Kidney (tissue), 22 donors: ENCODE measurements at regions of chr1 and their contacts with region 1.

Region 1: DNA sequence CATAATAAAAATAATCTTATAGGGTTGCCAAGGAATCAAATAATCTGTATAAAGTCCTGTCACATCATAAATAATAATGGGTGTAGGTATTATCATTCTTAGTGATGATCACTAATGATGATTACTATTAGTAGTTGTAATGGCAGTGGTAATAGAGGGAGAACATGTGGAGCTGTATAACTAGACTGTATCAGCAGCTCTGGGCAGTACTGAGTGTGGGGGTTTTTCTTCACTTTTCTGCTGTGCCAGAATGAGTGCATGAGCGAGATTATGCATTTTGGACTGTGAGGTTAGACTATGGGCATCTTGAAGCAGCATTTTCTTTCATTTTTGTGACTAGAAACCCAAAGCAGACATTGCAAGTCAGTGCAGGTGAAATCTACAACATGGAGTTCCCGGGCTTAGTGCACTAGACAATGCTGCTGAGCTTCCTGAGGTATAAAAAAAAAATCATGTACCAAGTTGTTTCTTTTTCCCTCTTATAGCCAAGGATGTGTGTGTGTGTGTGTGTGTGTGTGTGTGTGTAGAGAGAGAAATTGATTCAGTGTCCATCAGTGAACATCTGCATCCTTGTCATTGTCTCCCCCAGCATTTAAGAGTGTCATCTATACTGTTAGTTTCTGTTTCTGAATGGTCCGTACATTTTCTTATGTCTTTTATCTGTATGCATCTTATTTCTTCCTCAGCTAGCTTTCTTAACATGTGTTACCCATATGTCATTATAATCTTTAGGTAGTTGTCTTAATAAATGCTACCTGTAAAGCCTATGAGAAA is 86.6 kb downstream of the GIPC2 start:
- DNase-seq: no peak
- H3K4me3 ChIP-seq: no peak overlapping the region
- H3K27ac ChIP-seq: no peak overlapping the region
- H3K4me1 ChIP-seq: no peaks in the 10 kb centered on the region
- H3K27me3 ChIP-seq: no peaks in the 10 kb centered on the region
- CTCF ChIP-seq: no peak

Region 2: DNA sequence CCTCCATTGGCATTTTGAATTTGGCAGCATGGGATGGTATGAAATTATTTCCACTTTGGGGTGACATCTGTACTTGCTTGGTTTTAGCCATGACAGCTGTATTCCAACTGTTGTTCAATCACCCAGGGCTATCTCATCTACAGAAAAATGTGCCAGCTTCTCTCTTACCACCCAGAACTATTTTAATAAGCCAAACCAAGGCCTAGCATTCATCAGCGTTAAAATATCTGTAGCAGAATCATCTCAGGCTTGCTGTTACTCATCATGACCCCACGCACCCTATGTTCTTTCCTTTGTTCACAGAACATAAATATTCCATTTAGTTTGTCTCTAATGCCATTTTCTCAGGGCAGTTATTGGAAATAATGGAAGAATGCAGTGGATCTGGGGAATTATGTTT is 36.8 kb before region 1 on chr1:
- intact Hi-C with region 1: no loop called
- DNase-seq: no peak
- H3K4me3 ChIP-seq: no peak overlapping the region
- H3K27ac ChIP-seq: no peak overlapping the region
- H3K4me1 ChIP-seq: no peaks in the 10 kb centered on the region
- H3K27me3 ChIP-seq: no peaks in the 10 kb centered on the region
- CTCF ChIP-seq: no peak

Region 3: DNA sequence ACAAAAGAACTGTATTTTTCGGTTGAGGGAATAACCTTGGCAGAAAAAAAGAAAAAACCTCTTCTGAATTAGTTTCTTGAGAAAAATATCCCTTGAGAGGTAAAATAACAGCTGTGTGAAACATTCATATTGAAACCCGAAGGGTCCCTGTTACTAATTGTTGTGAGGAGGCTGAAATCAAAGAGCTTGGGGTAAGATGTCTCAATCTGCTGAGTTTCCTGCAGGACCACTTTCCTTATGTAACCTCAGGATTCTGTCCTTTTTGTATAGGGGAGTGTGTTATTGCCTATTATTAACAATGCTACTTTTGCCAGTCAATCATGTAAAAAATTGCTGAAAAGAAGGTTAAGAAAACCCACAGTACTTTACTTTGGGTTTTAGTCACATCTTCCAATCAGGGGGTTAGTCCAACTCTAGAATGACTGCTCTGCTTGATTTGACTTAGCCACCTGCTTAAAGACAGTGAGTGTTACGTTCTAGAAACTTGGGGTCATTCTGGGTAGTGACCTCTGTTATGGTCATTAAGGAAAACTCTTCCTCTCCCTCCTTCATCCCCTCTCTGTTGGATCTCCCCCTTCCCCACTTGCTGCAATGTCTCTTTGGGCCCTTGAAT is 52.2 kb after region 1 on chr1:
- intact Hi-C with region 1: no loop called
- DNase-seq: no peak
- H3K4me3 ChIP-seq: no peak overlapping the region
- H3K27ac ChIP-seq: no peak overlapping the region
- H3K4me1 ChIP-seq: no peaks in the 10 kb centered on the region
- H3K27me3 ChIP-seq: no peaks in the 10 kb centered on the region
- CTCF ChIP-seq: no peak

Region 4: DNA sequence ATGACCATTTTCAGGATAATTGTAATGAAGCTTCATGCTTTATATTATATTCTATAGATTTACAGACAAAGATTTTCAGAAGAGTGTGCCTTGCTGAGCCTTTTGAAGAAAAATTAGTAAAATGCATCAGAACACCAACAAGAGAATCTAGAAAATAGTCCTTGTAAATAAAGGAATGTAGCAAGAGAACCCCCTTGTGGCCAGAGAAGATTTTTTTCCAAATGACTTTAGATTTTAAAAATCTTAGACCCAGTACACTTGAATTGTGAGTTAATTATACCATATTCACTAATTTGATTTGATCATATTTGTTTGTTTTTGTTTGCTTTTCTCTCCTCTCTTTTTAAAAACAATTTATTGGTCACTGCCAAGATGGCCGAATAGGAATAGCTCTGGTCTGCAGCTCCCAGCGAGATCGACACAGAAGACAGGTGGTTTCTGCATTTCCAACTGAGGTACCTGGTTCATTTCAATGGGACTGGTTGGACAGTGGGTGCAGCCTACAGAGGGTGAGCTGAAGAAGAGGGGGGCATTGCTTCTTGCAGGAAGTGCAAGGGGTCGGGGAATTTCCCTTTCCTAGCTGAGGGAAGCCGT is 475.1 kb after region 1 on chr1:
- intact Hi-C with region 1: loop called (anchors 10 kb)
- DNase-seq: peak in 2 of 5 donors; percentile 33 to 38
- H3K4me3 ChIP-seq: no peak overlapping the region
- H3K27ac ChIP-seq: no peak overlapping the region
- H3K4me1 ChIP-seq: no peaks in the 10 kb centered on the region
- H3K27me3 ChIP-seq: no peaks in the 10 kb centered on the region
- CTCF ChIP-seq: peak; percentile 43

Region 5: GRCh38 chr1:78676347-78676982 is 544.1 kb after region 1 on chr1:
- intact Hi-C with region 1: loop called (anchors 10 kb)
- DNase-seq: peak in 3 of 5 donors; percentile 32 to 83 (median 70)
- H3K4me3 ChIP-seq: no peak overlapping the region
- H3K27ac ChIP-seq: no peak overlapping the region
- H3K4me1 ChIP-seq: no peaks in the 10 kb centered on the region
- H3K27me3 ChIP-seq: no peaks in the 10 kb centered on the region
- CTCF ChIP-seq: peak; percentile 73